Thyroid gland (tissue), 4 donors: ENCODE measurements at regions of chr12 and their contacts with region 1.

Region 1: GRCh38 chr12:57175428-57176138 is 28.2 kb upstream of the LRP1-AS start:
- DNase-seq: peak; percentile 44
- H3K4me3 ChIP-seq: no peak overlapping the region
- H3K27ac ChIP-seq: no peak overlapping the region
- H3K4me1 ChIP-seq: no peaks in the 10 kb centered on the region
- H3K27me3 ChIP-seq: no peaks in the 10 kb centered on the region
- CTCF ChIP-seq: peak in 4 of 6 experiments; percentile 14 to 54 (median 40)
- POLR2A ChIP-seq: no peak

Region 2: GRCh38 chr12:57135527-57136326 is 39.9 kb before region 1 on chr12:
- intact Hi-C with region 1: loop called (anchors 5 kb)
- DNase-seq: no peak
- H3K4me3 ChIP-seq: no peak overlapping the region
- H3K27ac ChIP-seq: peak overlapping the region; percentile 17 to 74 (median 32)
- H3K4me1 ChIP-seq: peaks cover 0 to 10% of the 10 kb centered on the region in 2 donors
- H3K27me3 ChIP-seq: no peaks in the 10 kb centered on the region
- CTCF ChIP-seq: no peak
- POLR2A ChIP-seq: no peak